GM10248 (cell line): ENCODE measurements at regions of chr17 and their contacts with region 1.

Region 1: GRCh38 chr17:7561028-7561575 is 617 bp upstream of the SENP3 start:
- DNase-seq: peak; percentile 90
- CTCF ChIP-seq: peak; percentile 86

Region 2: GRCh38 chr17:7351665-7352501 is 209.2 kb before region 1 on chr17 and contains the start of gene KCTD11:
- CTCF ChIA-PET with region 1: interaction called, 55 read pairs
- POLR2A ChIA-PET with region 1: no interaction called
- DNase-seq: peak; percentile 95
- CTCF ChIP-seq: peak; percentile 57

Region 3: DNA sequence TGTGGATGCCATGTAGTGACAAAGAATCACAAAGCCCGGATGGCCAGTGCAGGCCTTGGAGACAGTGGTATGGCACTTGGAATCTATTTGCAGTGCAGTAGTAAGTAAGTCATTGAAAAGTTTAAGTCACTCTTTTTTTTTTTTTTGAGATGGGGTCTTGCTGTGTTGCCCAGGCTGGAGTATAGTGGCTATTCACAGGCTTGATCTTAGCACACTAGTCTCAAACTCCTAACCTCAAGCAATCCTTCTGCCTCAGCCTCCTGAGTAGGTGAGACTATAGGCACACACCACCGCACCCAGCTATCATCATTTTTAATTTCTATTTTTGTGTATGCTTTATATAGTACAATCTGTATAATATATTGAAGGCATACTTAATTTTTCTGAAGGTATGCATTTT is 162.5 kb before region 1 on chr17:
- CTCF ChIA-PET with region 1: no interaction called
- POLR2A ChIA-PET with region 1: no interaction called
- DNase-seq: no peak
- CTCF ChIP-seq: no peak

Region 4: DNA sequence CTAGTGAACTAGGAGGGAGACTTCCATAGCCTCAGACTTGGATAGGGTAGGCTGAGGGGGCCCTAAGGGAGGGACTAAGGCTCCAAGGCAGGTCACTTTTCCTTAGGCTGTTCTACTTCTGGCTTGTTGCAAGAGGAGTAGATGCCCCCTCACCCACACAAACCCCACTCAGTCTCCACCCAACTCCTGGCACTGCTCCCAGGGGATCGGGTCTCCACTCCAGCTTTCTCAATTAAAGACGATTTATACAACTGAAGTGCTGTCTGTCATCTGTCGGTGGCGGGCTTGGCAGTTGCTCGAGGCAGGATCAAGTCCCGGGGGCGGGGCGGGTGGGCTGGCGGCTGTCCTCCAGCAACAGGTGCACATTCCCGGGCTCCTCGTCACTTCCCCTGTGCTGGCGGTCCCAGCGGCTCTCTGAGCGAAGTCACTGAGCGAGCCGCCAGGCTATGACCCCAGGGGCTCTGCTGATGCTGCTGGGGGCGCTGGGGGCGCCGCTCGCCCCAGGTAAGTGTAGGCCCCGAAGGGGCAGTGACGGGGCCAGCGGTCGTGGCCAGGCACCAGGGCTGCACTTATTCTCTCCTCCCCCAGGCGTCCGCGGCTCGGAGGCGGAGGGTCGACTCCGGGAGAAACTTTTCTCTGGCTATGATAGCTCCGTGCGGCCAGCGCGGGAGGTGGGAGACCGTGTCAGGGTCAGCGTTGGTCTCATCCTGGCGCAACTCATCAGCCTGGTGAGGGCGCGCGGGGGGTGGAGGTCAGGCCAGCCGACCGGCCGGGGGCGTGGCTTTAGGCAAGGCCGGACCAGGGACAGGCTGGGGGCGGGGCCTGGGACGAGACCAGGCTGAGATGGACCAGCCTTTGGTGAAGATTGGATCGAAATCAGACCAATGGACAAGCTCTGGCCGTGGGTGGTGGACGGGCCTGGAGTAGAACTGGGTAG is 116.2 kb before region 1 on chr17 and contains the start of gene CHRNB1:
- CTCF ChIA-PET with region 1: interaction called, 20 read pairs
- POLR2A ChIA-PET with region 1: no interaction called
- DNase-seq: peak; percentile 71
- CTCF ChIP-seq: no peak

Region 5: DNA sequence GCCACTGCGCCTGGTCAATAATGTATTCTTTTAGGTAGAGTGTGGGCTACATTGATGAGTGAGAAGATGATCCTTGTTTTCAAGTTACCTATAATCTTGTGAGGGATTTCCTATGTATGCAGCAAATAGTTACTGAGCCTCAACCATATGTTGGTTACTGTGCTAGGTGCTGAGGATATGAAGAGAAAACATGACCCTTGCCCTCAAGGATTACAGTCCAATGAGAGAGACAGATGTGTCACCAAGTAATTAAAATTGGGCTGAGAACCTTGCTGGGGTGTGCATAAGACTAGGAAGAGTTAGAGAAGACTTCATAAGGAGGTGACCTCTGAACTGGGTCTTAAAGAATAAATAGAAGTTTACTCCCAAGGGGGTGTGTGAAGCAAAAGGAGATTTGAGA is 69.5 kb before region 1 on chr17:
- CTCF ChIA-PET with region 1: interaction called, 13 read pairs
- POLR2A ChIA-PET with region 1: no interaction called
- DNase-seq: no peak
- CTCF ChIP-seq: no peak

Region 6: GRCh38 chr17:7523033-7523432 is 38.1 kb before region 1 on chr17:
- CTCF ChIA-PET with region 1: interaction called, 21 read pairs
- POLR2A ChIA-PET with region 1: no interaction called
- DNase-seq: no peak
- CTCF ChIP-seq: peak; percentile 25

Region 7: GRCh38 chr17:7589204-7589868 is 28.2 kb after region 1 on chr17:
- CTCF ChIA-PET with region 1: interaction called, 11 read pairs
- POLR2A ChIA-PET with region 1: no interaction called
- DNase-seq: peak; percentile 85
- CTCF ChIP-seq: peak; percentile 80